ENCODE measurements at regions of chr20 and their contacts with region 1.

Region 1: DNA sequence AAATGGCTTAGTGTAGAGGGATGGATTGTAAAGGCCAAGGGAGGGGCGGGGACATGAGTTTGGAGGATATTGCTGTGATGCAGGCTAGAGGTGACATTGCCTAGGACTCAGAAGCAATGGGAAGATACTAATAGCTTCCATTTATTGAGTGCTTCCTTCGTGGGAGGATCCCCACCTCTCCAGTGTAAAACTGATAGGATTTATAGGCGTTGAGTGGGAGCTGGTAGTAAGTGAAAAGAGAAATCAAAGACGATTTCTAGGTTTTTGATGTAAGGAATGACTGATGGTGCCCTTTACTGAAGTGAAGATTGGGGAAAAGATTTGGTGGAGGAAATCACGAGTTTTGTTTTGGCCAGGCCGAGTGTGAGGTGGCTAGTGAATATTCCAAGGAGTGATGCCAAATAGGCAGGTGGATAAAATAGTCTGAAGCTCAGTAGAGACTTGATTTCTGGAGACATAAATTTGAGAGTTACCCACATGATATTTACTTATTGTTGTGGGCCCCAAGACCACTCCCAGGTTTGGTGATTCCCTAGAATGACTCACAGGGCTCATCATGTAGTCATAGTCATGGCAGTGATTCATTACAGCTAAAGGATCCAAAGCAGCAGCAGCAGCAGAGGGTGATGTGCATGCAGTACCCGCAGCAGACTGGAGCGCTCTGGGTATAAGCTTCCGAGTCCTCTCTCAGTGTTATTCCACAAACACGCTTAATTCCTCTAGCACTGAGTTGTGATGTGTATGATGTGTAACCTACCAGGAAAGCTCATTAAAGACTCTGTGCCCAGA is 10.2 kb downstream of the RPRD1B start:
- DNase-seq: no peak
- H3K4me3 ChIP-seq: no peak overlapping the region
- H3K27ac ChIP-seq: no peak overlapping the region
- H3K4me1 ChIP-seq: peaks cover 0 to 11% (median 1%) of the 10 kb centered on the region in 4 experiments; a peak in 3 of 7 replicates
- H3K27me3 ChIP-seq: no peaks in the 10 kb centered on the region
- CTCF ChIP-seq: no peak
- EP300 ChIP-seq: no peak
- POLR2A ChIP-seq: no peak
- RAD21 ChIP-seq: no peak

Region 2: DNA sequence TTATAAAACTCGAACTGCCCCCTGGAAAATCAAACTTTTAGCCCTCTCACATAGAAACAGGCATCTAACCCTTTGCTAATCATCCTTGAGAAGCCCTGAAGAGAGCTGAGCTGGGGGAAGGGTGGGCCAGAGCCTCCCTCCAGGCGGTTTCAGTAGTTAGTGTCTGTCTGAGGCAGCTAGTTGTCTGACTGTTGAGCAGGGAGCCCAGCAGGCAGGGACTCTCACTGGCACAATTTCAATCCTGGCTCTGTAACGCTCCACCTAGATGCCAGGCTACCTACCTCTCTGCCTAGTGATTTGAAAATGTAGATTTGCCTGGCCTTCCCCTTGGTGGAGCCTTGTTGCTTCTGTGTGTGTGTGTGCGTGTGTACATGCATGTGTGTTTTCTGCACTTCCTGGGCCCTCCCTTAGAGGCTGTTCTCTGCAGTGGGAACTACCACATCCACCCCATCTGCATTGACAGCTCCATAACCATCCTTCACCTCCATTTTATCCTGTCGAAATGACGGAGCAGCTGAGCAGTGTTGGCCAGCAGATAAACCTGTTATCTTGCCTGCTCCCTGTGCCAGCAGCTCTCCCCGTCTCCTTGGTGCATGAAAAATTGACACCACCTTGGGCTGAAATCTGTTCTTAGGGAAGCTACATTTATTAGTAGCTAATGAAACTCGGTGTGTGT is 210.3 kb before region 1 on chr20:
- CTCF ChIA-PET with region 1: no interaction called
- POLR2A ChIA-PET with region 1: no interaction called
- DNase-seq: no peak
- H3K4me3 ChIP-seq: no peak overlapping the region
- H3K27ac ChIP-seq: no peak overlapping the region
- H3K4me1 ChIP-seq: no peaks in the 10 kb centered on the region
- H3K27me3 ChIP-seq: no peaks in the 10 kb centered on the region
- CTCF ChIP-seq: no peak
- EP300 ChIP-seq: no peak
- POLR2A ChIP-seq: no peak
- RAD21 ChIP-seq: no peak

Region 3: DNA sequence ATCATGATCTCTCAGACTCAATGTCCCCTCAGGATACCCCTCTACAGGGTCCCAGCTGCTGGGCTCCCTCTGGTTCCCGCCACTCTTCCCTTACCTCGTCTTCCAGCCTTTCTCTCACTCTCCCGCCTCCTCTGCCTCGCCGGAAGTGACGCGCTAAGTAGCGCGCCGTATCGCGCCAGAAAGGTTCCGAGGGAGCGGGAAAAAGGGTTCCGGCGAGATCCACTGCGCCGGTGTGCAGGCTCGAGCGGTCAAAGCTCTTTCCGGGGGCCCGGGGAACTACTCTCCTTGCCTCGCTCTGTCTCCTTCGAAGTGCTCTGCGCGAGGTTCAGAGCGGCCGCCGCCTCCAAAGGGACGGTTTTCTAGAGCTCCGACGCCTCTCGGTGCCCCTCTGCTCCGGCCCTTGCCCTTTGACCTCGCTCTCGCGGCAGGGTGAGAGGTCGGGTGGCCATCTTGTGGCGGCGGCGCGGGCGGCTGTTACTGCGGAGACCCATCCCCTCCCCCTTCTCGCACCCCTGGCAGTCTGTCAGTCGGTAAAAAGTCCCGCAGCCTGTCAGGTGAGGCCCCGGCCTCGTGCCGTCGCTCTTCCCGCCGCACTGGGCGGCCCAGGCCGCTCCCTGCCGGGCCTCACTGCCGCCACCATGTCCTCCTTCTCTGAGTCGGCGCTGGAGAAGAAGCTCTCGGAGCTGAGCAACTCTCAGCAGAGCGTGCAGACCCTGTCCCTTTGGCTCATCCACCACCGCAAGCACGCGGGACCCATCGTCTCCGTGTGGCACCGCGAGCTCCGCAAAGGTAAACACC is 10.2 kb before region 1 on chr20 and contains the starts of genes RPRD1B and TTI1:
- CTCF ChIA-PET with region 1: interaction called, 5 read pairs
- POLR2A ChIA-PET with region 1: interaction called, 20 read pairs
- DNase-seq: peak; percentile 51 to 91
- H3K4me3 ChIP-seq: peak within 1 kb of the TSS; percentile 93 to 99 (median 97)
- H3K27ac ChIP-seq: peak within 1 kb of the TSS; percentile 99
- H3K4me1 ChIP-seq: peaks cover 0 to 10% (median 3%) of the 10 kb centered on the region in 4 experiments; a peak in 4 of 7 replicates
- H3K27me3 ChIP-seq: no peaks in the 10 kb centered on the region
- CTCF ChIP-seq: no peak
- EP300 ChIP-seq: no peak
- POLR2A ChIP-seq: peak; percentile 91 to 97
- RAD21 ChIP-seq: no peak
- total RNA-seq, gene RPRD1B: 17.7 and 20.9 TPM in 2 replicates
- total RNA-seq, gene TTI1: 47.0 TPM in 2 replicates

Region 4: GRCh38 chr20:38057351-38057972 is 13.8 kb after region 1 on chr20:
- CTCF ChIA-PET with region 1: interaction called, 12 read pairs
- POLR2A ChIA-PET with region 1: interaction called, 4 read pairs
- DNase-seq: peak in 1 of 2 experiments; percentile 92
- H3K4me3 ChIP-seq: no peak overlapping the region
- H3K27ac ChIP-seq: no peak overlapping the region
- H3K4me1 ChIP-seq: no peaks in the 10 kb centered on the region
- H3K27me3 ChIP-seq: no peaks in the 10 kb centered on the region
- CTCF ChIP-seq: peak; percentile 72 to 94 (median 90)
- EP300 ChIP-seq: no peak
- POLR2A ChIP-seq: no peak
- RAD21 ChIP-seq: peak; percentile 85 to 90

Region 5: GRCh38 chr20:38173237-38174156 is 129.8 kb after region 1 on chr20:
- CTCF ChIA-PET with region 1: no interaction called
- POLR2A ChIA-PET with region 1: no interaction called
- DNase-seq: no peak
- H3K4me3 ChIP-seq: no peak overlapping the region
- H3K27ac ChIP-seq: no peak overlapping the region
- H3K4me1 ChIP-seq: no peaks in the 10 kb centered on the region
- H3K27me3 ChIP-seq: no peaks in the 10 kb centered on the region
- CTCF ChIP-seq: no peak
- EP300 ChIP-seq: no peak
- POLR2A ChIP-seq: no peak
- RAD21 ChIP-seq: no peak